Activated CD4-positive, alpha-beta T cell treated with anti-CD3 and anti-CD28 coated beads for 36 hours (primary cell): ENCODE measurements at regions of chr18 and their contacts with region 1.

Region 1: DNA sequence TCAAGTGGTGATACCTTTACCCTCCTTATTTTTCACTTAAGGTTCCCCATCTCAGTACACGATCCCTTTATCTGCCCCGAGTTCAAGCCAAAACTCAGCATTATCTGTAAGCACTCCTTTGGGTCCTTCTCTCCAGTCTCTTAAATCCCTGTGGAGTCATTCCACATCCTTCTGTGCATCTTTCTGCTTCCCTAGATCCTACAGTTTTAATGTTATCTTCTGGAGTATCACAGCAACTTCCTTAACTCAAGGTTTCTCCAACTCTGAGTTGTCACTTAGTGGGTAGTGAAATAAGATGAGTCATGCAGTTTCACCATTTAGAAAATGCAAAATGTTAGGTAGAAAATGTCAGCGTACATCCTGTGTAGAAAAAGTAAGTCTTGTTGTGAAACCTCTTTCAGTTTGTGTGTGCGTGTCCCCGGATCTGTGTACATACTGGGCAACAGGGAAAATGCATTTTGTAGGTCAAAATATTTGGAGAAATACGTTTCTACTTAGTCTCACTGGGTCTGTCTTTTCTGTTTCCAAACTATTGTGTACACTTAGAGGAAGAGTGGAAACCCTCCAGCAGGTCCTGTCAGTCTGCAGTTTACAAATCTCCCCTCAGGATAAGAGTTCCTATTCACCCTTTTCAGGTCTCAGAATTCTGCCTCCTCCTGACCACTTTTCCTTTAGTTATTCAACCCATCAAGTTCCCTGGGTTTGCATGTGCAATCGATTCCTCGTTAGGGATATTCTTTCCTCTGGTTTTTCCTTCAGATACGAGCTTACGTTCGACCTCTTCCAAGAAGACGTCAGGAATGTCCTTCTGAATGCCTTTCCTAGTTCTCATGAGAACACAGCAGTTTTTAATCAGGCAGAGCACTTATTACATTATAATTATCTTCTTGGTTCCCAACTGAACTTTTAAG is 154.8 kb downstream of the TGIF1 start:
- DNase-seq: peak; percentile 59
- ATAC-seq: peak; percentile 69
- H3K4me3 Mint-ChIP-seq: no peak overlapping the region
- H3K27ac Mint-ChIP-seq: no peak overlapping the region
- H3K4me1 Mint-ChIP-seq: peaks cover 11% of the 10 kb centered on the region
- H3K27me3 Mint-ChIP-seq: no peaks in the 10 kb centered on the region

Region 2: GRCh38 chr18:3623769-3624545 is 19.2 kb after region 1 on chr18:
- CTCF ChIA-PET with region 1: interaction called, 4 read pairs
- POLR2A ChIA-PET with region 1: interaction called, 3 read pairs
- intact Hi-C with region 1: loop called (anchors 1 kb)
- DNase-seq: peak; percentile 68
- ATAC-seq: peak; percentile 50
- H3K4me3 Mint-ChIP-seq: peak overlapping the region; percentile 42
- H3K27ac Mint-ChIP-seq: peak overlapping the region; percentile 91
- H3K4me1 Mint-ChIP-seq: peaks cover 39% of the 10 kb centered on the region
- H3K27me3 Mint-ChIP-seq: no peaks in the 10 kb centered on the region

Region 3: GRCh38 chr18:3652380-3653262 is 47.9 kb after region 1 on chr18:
- CTCF ChIA-PET with region 1: no interaction called
- POLR2A ChIA-PET with region 1: no interaction called
- intact Hi-C with region 1: loop called (anchors 1 to 2 kb)
- DNase-seq: peak; percentile 90
- ATAC-seq: peak; percentile 97
- H3K4me3 Mint-ChIP-seq: peak overlapping the region; percentile 27
- H3K27ac Mint-ChIP-seq: peak overlapping the region; percentile 91
- H3K4me1 Mint-ChIP-seq: peaks cover 46% of the 10 kb centered on the region
- H3K27me3 Mint-ChIP-seq: no peaks in the 10 kb centered on the region